GM12878 (cell line): ENCODE measurements at regions of chr4 and their contacts with region 1.

Region 1: DNA sequence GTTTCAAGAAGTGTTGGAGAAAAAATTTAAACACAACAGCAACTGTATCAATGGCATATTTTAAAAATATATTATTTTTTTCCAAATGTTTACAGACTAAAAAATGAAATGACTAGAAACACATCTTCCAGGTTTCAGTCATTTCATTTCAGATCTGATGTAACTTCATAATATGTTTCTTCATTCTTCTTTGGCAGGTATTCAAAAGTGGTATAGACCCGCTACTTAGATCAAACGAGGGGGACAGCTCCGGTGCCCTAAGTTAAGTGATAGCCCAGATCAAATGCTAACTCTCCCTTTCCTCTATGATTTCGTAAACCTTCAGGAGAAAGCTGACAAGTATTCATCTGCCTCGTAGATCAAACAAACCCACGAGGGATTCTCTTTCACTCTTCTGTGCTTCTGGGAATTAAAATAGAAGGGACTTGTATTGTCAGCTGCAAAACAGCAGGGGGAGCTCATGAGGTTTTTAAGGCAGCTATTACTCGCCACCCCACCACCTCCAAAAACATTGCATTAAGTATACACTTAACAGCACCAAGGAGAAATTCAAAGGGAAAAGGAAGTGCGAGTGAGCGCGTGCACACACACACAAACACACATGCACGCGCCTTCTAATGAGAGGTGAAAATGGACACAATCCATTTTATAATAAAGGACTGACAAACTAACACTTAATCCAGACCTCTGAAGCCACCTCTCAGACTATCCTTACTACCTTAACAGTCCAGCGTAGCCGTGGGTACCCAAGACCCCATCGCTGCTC is 21.4 kb downstream of the HELT start:
- DNase-seq: peak; percentile 23
- ATAC-seq: peak; percentile 83
- H3K4me3 ChIP-seq: no peak overlapping the region
- H3K27ac ChIP-seq: no peak overlapping the region
- H3K4me1 ChIP-seq: no peaks in the 10 kb centered on the region
- H3K27me3 ChIP-seq: no peaks in the 10 kb centered on the region
- CTCF ChIP-seq: peak; percentile 73 to 80 (median 77)
- EP300 ChIP-seq: no peak
- POLR2A ChIP-seq: no peak
- RAD21 ChIP-seq: peak; percentile 74

Region 2: GRCh38 chr4:185005216-185005819 is 34.4 kb before region 1 on chr4:
- CTCF ChIA-PET with region 1: interaction called, 31 read pairs
- POLR2A ChIA-PET with region 1: no interaction called
- RAD21 ChIA-PET with region 1: interaction called, 5 read pairs
- SMC1A ChIA-PET with region 1: interaction called, 4 read pairs
- in situ Hi-C with region 1: no loop called
- intact Hi-C with region 1: no loop called
- DNase-seq: peak; percentile 8
- ATAC-seq: peak; percentile 99
- H3K4me3 ChIP-seq: no peak overlapping the region
- H3K27ac ChIP-seq: no peak overlapping the region
- H3K4me1 ChIP-seq: no peaks in the 10 kb centered on the region
- H3K27me3 ChIP-seq: peaks cover 3 to 5% of the 10 kb centered on the region in 2 experiments; a peak in 2 of 4 replicates
- CTCF ChIP-seq: peak; percentile 89 to 94 (median 94)
- EP300 ChIP-seq: no peak
- POLR2A ChIP-seq: no peak
- RAD21 ChIP-seq: peak; percentile 87

Region 3: GRCh38 chr4:185096032-185096653 is 56.5 kb after region 1 on chr4:
- CTCF ChIA-PET with region 1: interaction called, 87 read pairs
- POLR2A ChIA-PET with region 1: no interaction called
- RAD21 ChIA-PET with region 1: interaction called, 47 read pairs
- SMC1A ChIA-PET with region 1: interaction called, 57 read pairs
- in situ Hi-C with region 1: no loop called
- intact Hi-C with region 1: loop called (anchors 2 kb)
- DNase-seq: no peak
- ATAC-seq: peak; percentile 56; the same call in 2 of the 3 replicates
- H3K4me3 ChIP-seq: no peak overlapping the region
- H3K27ac ChIP-seq: no peak overlapping the region
- H3K4me1 ChIP-seq: no peaks in the 10 kb centered on the region
- H3K27me3 ChIP-seq: peaks cover 2 to 3% of the 10 kb centered on the region in 2 experiments; a peak in 1 of 4 replicates
- CTCF ChIP-seq: peak; percentile 34 to 54 (median 42); a peak in 5 of 6 replicates
- EP300 ChIP-seq: no peak
- POLR2A ChIP-seq: no peak
- RAD21 ChIP-seq: peak; percentile 74

Region 4: GRCh38 chr4:185142912-185143595 is 103.4 kb after region 1 on chr4 and contains the start of gene SLC25A4:
- CTCF ChIA-PET with region 1: interaction called, 7 read pairs
- POLR2A ChIA-PET with region 1: no interaction called
- RAD21 ChIA-PET with region 1: no interaction called
- SMC1A ChIA-PET with region 1: interaction called, 13 read pairs
- in situ Hi-C with region 1: loop called (anchors 5 kb)
- intact Hi-C with region 1: no loop called
- DNase-seq: peak; percentile 50
- ATAC-seq: peak; percentile 99
- H3K4me3 ChIP-seq: peak within 1 kb of the TSS; percentile 80
- H3K27ac ChIP-seq: 0 out of 2 replicates have a peak within 1 kb of the TSS, but pooled peaks have one; percentile 46
- H3K4me1 ChIP-seq: peaks cover 3% of the 10 kb centered on the region; the same call in 1 of the 2 replicates
- H3K27me3 ChIP-seq: no peaks in the 10 kb centered on the region; a peak in 1 of 4 replicates
- CTCF ChIP-seq: peak; percentile 43 to 58 (median 48); a peak in 5 of 6 replicates
- EP300 ChIP-seq: no peak
- POLR2A ChIP-seq: peak; percentile 100
- RAD21 ChIP-seq: no peak
- polyA plus RNA-seq, gene SLC25A4: 17.4 to 35.9 TPM

Region 5: DNA sequence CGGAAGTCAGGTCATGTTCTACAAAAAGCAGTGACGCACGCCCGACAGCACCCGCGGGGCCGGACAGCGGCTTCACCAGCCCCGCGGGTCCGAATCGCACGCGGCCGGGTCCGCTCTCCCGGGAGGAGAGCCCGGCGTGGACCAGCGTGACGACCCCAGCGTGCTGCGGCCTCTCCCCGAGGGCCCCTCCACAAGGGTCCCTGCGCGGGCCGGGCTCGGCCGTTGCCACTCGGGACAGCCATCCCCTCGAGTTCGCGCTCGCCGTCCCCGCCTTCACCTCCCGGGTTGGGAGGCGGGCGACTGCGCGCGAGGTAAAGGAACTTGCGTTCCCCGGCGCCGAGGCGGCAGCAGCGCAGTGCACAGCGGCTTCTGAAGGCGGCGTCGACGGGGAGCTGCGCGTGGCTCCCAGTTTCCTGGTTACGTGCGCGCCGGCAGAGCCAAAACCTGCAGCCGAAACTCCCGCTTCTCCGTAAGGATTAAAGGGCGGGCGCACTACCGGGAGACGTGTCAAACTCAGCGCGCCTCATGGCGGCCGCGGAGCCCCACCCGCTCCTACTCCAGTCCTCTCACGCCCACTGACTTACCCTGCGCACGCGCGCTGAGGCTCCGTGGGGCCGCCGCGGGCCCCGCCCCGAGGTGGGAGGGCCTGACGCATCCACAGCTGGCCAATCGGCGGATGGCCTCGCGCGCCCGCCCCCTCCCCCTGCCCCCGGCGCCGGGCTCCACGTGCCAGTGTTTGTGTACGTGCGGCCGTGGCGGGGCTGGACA is 356.4 kb after region 1 on chr4:
- CTCF ChIA-PET with region 1: no interaction called
- POLR2A ChIA-PET with region 1: no interaction called
- RAD21 ChIA-PET with region 1: no interaction called
- SMC1A ChIA-PET with region 1: no interaction called
- in situ Hi-C with region 1: no loop called
- intact Hi-C with region 1: no loop called
- DNase-seq: peak; percentile 97
- ATAC-seq: peak; percentile 91
- H3K4me3 ChIP-seq: peak overlapping the region; percentile 79
- H3K27ac ChIP-seq: peak overlapping the region; percentile 97
- H3K4me1 ChIP-seq: peaks cover 19% of the 10 kb centered on the region
- H3K27me3 ChIP-seq: no peaks in the 10 kb centered on the region
- CTCF ChIP-seq: no peak
- EP300 ChIP-seq: 0 out of 4 replicates have a peak, but pooled peaks of 1 of the 2 experiments have one; percentile 55
- POLR2A ChIP-seq: peak; percentile 86
- RAD21 ChIP-seq: no peak

Region 6: DNA sequence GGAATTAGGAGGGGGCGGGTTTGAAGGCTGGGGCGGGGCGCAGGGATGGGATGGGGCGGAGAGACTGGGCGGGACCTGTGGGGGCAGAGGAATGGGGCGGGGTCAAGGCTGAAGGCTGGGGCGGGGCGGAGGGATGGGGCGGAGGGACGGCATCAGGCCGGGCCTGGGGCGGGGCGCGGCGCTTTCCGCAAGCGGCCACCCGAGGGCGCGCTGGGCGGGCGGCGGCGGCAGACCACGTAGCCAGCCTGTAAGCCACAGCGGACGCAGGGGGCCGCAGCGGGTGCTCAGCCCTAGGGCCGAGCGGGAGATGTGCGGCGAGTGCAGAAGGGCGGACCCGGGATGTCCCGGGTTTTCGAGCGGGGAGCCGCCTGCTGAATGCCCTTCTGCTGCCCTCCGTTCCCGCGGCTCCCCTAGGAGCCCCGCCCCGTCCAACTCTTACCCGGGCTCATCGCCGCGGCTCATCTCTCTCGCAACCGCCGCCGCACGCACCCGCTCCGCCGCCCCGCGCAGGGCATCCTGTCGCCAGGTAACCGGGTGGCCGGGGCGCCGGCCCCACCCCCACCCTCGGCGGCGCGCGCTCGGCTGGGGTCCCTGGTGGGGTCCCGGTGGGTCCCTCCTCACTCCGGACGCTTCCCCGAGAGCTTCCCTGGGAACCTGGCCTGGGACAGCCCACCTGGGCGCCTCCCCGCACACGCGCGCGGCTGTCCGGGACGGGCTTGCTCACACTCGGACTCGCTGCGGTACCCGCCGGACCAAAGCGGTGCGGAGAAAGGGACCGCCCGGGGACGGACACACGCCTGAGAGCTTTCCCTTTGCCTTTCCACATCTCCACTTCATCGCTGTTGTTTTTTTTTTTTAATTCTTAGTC is 431.8 kb after region 1 on chr4 and contains the start of gene CCDC110:
- CTCF ChIA-PET with region 1: no interaction called
- POLR2A ChIA-PET with region 1: no interaction called
- RAD21 ChIA-PET with region 1: no interaction called
- SMC1A ChIA-PET with region 1: no interaction called
- in situ Hi-C with region 1: no loop called
- intact Hi-C with region 1: no loop called
- DNase-seq: peak; percentile 47
- ATAC-seq: peak; percentile 94
- H3K4me3 ChIP-seq: peak within 1 kb of the TSS; percentile 78
- H3K27ac ChIP-seq: peak within 1 kb of the TSS; percentile 81
- H3K4me1 ChIP-seq: peaks cover 13% of the 10 kb centered on the region
- H3K27me3 ChIP-seq: peaks cover 0 to 2% of the 10 kb centered on the region in 2 experiments; a peak in 1 of 4 replicates
- CTCF ChIP-seq: peak; percentile 40 to 72 (median 56); a peak in 5 of 6 replicates
- EP300 ChIP-seq: no peak
- POLR2A ChIP-seq: peak; percentile 86
- RAD21 ChIP-seq: peak; percentile 65
- polyA plus RNA-seq, gene CCDC110: 1.2 to 2.1 TPM

Region 7: GRCh38 chr4:186037692-186038658 is 998.3 kb after region 1 on chr4:
- CTCF ChIA-PET with region 1: no interaction called
- POLR2A ChIA-PET with region 1: no interaction called
- RAD21 ChIA-PET with region 1: no interaction called
- SMC1A ChIA-PET with region 1: no interaction called
- in situ Hi-C with region 1: loop called (anchors 25 kb)
- intact Hi-C with region 1: no loop called
- DNase-seq: peak; percentile 36
- ATAC-seq: peak; percentile 84
- H3K4me3 ChIP-seq: no peak overlapping the region
- H3K27ac ChIP-seq: no peak overlapping the region
- H3K4me1 ChIP-seq: no peaks in the 10 kb centered on the region
- H3K27me3 ChIP-seq: peaks cover 0 to 2% of the 10 kb centered on the region in 2 experiments; a peak in 2 of 4 replicates
- CTCF ChIP-seq: peak; percentile 58 to 81 (median 74); a peak in 5 of 6 replicates
- EP300 ChIP-seq: no peak
- POLR2A ChIP-seq: no peak
- RAD21 ChIP-seq: peak; percentile 81